ENCODE measurements at regions of chr18 and their contacts with region 1.

Region 1: DNA sequence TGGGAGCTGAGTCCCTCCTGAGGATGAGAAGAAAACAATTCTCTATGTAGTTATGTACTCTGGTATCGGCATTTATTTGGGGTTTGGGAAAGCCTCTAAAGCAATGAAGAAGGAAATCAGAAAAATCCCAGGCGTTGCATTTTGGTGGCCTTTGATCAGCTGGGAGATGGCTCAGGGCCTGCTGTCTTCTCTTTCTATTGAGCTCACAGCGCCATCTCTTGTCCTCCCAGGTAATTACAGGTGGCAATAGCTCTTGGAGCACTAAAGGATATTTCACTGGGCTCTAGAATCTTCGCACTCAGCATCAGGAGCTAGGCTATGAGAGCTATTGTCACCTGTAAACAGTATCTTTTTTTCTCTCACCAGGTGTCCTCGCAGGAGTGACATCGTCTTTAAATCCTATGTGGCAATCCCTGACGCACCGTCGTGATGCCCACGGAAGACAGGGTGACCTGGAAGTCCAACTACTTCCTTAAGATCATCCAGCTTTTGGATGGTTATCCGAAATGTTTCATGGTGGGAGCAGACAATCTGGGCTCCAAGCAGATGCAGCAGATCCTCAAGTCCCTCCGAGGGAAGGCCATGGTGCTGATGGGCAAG is 76.1 kb upstream of the PMAIP1 start:
- DNase-seq: peak; percentile 34 to 64 (median 38)
- ATAC-seq: peak; percentile 85
- H3K4me3 ChIP-seq: no peak overlapping the region
- H3K27ac ChIP-seq: no peak overlapping the region
- H3K4me1 ChIP-seq: no peaks in the 10 kb centered on the region
- H3K27me3 ChIP-seq: no peaks in the 10 kb centered on the region; a peak in 1 of 5 replicates
- CTCF ChIP-seq: peak; percentile 67 to 80 (median 69)
- EP300 ChIP-seq: no peak
- POLR2A ChIP-seq: no peak
- RAD21 ChIP-seq: peak; percentile 60 to 77

Region 2: DNA sequence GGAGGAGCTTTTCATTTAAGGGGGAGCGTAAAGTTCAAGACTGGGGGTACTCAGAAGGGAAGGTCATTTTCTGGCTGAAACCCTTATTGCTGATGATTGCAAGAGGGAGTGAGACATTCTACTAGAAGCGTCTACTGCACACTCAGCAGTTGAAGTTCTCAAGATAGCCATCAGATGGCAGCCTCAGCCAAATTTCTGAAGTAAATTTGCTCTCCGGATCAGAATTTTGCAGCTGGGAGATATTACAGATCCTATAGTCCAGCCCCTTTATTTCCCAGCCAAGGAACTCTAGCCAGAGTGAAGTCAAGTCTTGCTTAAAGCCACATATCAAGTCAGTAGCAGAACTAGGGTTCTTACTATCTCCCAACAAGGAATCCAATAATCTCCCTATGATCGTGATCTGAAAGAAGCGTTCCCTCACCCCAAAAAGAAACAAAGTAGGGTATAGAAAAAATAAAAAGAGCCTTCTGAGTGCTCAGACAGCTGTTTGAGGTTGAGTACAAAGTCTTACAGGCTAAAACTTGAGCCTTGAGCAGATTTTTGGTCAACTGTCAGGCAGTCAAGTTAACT is 574.4 kb before region 1 on chr18:
- CTCF ChIA-PET with region 1: interaction called, 3 read pairs
- POLR2A ChIA-PET with region 1: no interaction called
- in situ Hi-C with region 1: no loop called
- intact Hi-C with region 1: loop called (anchors 10 kb)
- DNase-seq: peak; percentile 16 to 59 (median 24)
- ATAC-seq: peak; percentile 81
- H3K4me3 ChIP-seq: no peak overlapping the region
- H3K27ac ChIP-seq: no peak overlapping the region
- H3K4me1 ChIP-seq: no peaks in the 10 kb centered on the region
- H3K27me3 ChIP-seq: no peaks in the 10 kb centered on the region
- CTCF ChIP-seq: peak; percentile 50 to 67 (median 59); a peak in 5 of 6 replicates
- EP300 ChIP-seq: no peak
- POLR2A ChIP-seq: no peak
- RAD21 ChIP-seq: peak; percentile 66 to 75

Region 3: GRCh38 chr18:59459369-59460079 is 364.2 kb before region 1 on chr18:
- CTCF ChIA-PET with region 1: interaction called, 3 read pairs
- POLR2A ChIA-PET with region 1: no interaction called
- in situ Hi-C with region 1: loop called (anchors 10 kb)
- intact Hi-C with region 1: loop called (anchors 1 kb)
- DNase-seq: peak; percentile 11 to 39 (median 31)
- ATAC-seq: no peak
- H3K4me3 ChIP-seq: no peak overlapping the region
- H3K27ac ChIP-seq: no peak overlapping the region
- H3K4me1 ChIP-seq: no peaks in the 10 kb centered on the region
- H3K27me3 ChIP-seq: peaks cover 0 to 13% of the 10 kb centered on the region in 2 experiments; a peak in 2 of 5 replicates
- CTCF ChIP-seq: peak; percentile 29 to 54 (median 47); a peak in 5 of 6 replicates
- EP300 ChIP-seq: no peak
- POLR2A ChIP-seq: no peak
- RAD21 ChIP-seq: peak; percentile 57 to 68

Region 4: DNA sequence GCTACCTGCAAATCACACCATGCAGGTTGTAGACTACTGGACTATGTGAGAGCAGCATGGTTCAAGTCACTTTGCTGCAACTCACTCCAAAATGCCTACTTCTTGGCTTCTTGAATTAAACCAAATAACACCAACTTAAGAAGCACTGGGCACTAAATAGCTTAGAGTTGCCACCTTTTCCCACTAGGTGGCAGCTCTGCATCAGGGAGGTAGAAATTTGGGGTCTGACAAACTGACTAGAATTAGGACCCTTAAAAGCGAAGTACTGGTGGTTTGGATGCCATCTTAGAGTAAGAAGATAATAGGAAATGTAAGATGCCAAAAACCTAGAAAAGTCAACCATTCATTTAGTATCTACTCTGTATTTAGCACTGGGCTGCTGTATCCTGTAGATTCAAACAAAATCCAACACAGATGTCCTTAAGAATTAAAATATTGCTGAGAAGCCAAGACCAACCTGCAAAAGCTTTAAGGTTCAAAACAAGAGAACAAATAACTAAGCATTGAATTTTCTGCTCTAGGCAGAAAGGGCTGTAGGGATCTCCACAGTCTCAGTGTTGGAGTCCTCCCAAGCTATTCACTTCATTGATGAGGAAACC is 192.0 kb before region 1 on chr18:
- CTCF ChIA-PET with region 1: no interaction called
- POLR2A ChIA-PET with region 1: no interaction called
- in situ Hi-C with region 1: loop called (anchors 10 kb)
- intact Hi-C with region 1: loop called (anchors 1 kb)
- DNase-seq: peak in 2 of 4 experiments; percentile 9 to 10
- ATAC-seq: no peak
- H3K4me3 ChIP-seq: no peak overlapping the region
- H3K27ac ChIP-seq: no peak overlapping the region
- H3K4me1 ChIP-seq: no peaks in the 10 kb centered on the region
- H3K27me3 ChIP-seq: no peaks in the 10 kb centered on the region; a peak in 1 of 5 replicates
- CTCF ChIP-seq: peak in 2 of 3 experiments; percentile 23 to 34; a peak in 4 of 6 replicates
- EP300 ChIP-seq: no peak
- POLR2A ChIP-seq: no peak
- RAD21 ChIP-seq: peak in 1 of 2 experiments; percentile 39; a peak in 3 of 4 replicates

Region 5: DNA sequence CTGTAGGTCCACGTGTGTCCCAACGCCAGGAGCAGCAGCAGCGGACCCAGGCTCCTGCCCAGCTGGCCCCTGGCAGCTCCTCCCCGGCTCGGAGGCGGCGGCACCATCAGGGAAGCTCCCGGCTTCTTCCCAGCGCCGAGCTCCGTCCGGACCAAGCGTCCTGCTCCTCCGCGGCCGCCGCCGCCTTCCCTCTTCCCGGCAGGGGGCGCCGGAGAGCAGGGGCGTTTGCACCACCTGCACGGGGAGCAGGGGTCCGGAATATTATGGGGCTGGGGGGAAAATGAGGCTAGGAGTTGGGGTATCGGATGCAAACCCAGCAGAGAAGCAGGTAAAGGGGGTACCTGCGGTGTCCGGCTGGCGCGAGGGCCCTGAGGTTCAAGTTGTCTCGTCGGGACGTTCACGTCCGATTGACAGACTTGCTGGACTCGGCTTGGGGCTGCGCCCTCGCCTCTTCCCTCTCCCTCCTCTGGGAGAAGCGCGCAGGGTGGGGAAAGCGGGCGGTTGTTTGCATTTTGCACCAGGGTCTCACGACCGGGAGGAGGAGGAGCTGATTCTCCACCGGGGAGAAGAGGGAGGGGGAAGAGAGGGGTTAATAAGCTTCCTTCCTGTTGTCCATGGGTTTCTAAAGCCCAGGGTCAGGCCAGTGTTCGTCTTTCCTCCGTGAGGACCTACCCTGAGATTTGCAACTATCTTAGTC is 126.3 kb before region 1 on chr18 and contains the start of gene CCBE1:
- CTCF ChIA-PET with region 1: no interaction called
- POLR2A ChIA-PET with region 1: no interaction called
- in situ Hi-C with region 1: no loop called
- intact Hi-C with region 1: loop called (anchors 2 kb)
- DNase-seq: peak; percentile 34 to 63 (median 58)
- ATAC-seq: peak; percentile 93
- H3K4me3 ChIP-seq: no peak within 1 kb of the TSS
- H3K27ac ChIP-seq: no peak within 1 kb of the TSS
- H3K4me1 ChIP-seq: peaks cover 0 to 11% of the 10 kb centered on the region in 2 experiments; a peak in 2 of 5 replicates
- H3K27me3 ChIP-seq: peaks cover 0 to 19% of the 10 kb centered on the region in 2 experiments; a peak in 1 of 5 replicates
- CTCF ChIP-seq: peak; percentile 48 to 62 (median 58)
- EP300 ChIP-seq: no peak
- POLR2A ChIP-seq: no peak
- RAD21 ChIP-seq: 0 out of 4 replicates have a peak, but pooled peaks of 1 of the 2 experiments have one; percentile 13
- polyA plus RNA-seq, gene CCBE1: not detected

Region 6: GRCh38 chr18:59783138-59783537 is 40.6 kb before region 1 on chr18:
- CTCF ChIA-PET with region 1: no interaction called
- POLR2A ChIA-PET with region 1: no interaction called
- in situ Hi-C with region 1: no loop called
- intact Hi-C with region 1: loop called (anchors 1 kb)
- DNase-seq: peak in 3 of 4 experiments; percentile 6 to 31 (median 11)
- ATAC-seq: peak; percentile 75
- H3K4me3 ChIP-seq: no peak overlapping the region
- H3K27ac ChIP-seq: no peak overlapping the region
- H3K4me1 ChIP-seq: no peaks in the 10 kb centered on the region
- H3K27me3 ChIP-seq: no peaks in the 10 kb centered on the region; a peak in 1 of 5 replicates
- CTCF ChIP-seq: peak; percentile 5 to 49 (median 31); a peak in 3 of 6 replicates
- EP300 ChIP-seq: no peak
- POLR2A ChIP-seq: no peak
- RAD21 ChIP-seq: peak in 1 of 2 experiments; percentile 48; a peak in 3 of 4 replicates

Region 7: DNA sequence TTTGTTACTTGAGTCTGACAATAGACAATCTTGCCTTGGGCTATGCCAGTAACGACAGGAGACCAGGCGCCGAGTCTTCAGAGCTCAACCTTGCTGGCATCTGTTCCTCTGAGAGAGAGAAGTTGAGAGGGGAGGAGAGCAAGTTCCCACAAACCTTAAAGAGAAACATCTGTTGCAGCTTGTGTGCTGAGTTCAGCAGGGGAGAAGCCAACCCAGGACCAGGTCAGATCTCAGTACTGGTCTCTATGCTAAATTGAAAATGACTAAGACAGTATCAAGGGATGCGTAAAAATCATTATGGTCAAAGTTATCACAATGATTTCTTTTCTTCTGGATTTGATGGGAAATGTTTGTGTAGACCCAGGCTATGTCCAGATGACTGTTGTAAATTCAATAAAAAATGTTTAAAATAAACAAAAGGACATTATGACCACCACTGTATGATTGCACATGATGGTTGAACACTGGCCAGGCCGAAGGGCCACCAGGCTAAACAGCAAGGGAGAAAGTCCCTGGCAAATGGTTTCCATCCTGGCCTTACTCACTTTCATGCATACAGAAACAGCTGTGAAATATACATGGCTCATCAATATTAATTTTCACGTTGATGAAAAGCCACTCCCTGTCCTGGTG is 24.2 kb before region 1 on chr18:
- CTCF ChIA-PET with region 1: no interaction called
- POLR2A ChIA-PET with region 1: no interaction called
- in situ Hi-C with region 1: no loop called
- intact Hi-C with region 1: no loop called
- DNase-seq: no peak
- ATAC-seq: no peak
- H3K4me3 ChIP-seq: no peak overlapping the region
- H3K27ac ChIP-seq: no peak overlapping the region
- H3K4me1 ChIP-seq: no peaks in the 10 kb centered on the region
- H3K27me3 ChIP-seq: peaks cover 0 to 5% of the 10 kb centered on the region in 2 experiments; a peak in 1 of 5 replicates
- CTCF ChIP-seq: no peak
- EP300 ChIP-seq: no peak
- POLR2A ChIP-seq: no peak
- RAD21 ChIP-seq: no peak

Measured in K562 (cell line).